ENCODE measurements at regions of chr1 and their contacts with region 1.

Region 1: DNA sequence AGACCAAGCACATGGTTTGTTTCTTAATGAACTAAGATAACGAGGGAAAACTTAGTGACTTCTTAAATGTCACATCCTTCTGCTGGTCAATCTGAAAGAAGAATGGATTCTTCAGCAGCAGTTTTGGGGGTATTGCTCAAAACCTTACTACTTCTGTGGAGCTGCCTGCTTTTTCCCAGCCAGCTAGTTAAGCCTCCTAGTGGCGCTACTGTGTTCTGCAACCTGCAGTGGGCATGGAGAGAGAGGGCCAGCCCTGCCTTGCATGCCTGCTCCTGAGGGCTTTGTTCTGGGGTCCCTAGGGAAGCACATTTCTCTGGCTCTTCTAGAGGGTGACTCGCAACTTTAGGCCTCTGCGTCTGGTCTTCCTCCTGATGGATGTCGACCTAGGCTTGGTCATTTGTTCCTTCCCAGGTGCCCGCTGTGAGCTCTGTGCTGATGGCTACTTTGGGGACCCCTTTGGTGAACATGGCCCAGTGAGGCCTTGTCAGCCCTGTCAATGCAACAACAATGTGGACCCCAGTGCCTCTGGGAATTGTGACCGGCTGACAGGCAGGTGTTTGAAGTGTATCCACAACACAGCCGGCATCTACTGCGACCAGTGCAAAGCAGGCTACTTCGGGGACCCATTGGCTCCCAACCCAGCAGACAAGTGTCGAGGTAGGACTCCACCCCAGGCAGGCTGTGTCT is 42.0 kb downstream of the LAMC2 start:
- DNase-seq: peak; percentile 59
- ATAC-seq: peak; percentile 72
- H3K4me3 Mint-ChIP-seq: no peak overlapping the region
- H3K27ac Mint-ChIP-seq: no peak overlapping the region
- H3K4me1 Mint-ChIP-seq: peaks cover 12% of the 10 kb centered on the region
- H3K27me3 Mint-ChIP-seq: no peaks in the 10 kb centered on the region

Region 2: DNA sequence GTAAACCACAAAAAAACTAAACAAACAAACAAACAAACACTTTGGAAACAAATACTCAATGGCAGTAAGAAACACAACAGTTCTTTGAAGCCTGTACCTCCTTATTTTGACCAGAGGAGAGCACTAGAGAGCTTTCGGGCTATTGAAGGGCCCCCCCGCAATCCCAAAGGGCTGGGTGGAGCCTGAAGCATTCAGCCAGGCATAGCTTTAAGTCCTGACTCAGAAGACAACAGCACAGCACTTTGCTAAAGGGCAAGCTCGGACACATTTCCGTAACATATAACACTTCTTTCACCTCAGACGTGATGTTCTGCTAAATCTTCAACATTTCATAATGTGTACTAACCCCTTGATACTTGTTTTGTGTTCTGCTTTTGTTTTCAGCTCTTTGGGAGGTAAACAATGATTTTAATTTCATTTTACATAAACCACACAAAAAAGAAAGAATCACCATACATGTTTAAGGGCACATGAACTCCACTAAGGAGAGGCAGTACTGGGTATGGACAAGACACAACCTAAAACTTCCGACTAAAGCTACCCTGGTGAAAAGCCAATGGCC is 265.5 kb before region 1 on chr1:
- CTCF ChIA-PET with region 1: interaction called, 10 read pairs
- POLR2A ChIA-PET with region 1: no interaction called
- DNase-seq: peak; percentile 43
- ATAC-seq: no peak
- H3K4me3 Mint-ChIP-seq: no peak overlapping the region
- H3K27ac Mint-ChIP-seq: no peak overlapping the region
- H3K4me1 Mint-ChIP-seq: no peaks in the 10 kb centered on the region
- H3K27me3 Mint-ChIP-seq: peaks cover 3% of the 10 kb centered on the region

Region 3: DNA sequence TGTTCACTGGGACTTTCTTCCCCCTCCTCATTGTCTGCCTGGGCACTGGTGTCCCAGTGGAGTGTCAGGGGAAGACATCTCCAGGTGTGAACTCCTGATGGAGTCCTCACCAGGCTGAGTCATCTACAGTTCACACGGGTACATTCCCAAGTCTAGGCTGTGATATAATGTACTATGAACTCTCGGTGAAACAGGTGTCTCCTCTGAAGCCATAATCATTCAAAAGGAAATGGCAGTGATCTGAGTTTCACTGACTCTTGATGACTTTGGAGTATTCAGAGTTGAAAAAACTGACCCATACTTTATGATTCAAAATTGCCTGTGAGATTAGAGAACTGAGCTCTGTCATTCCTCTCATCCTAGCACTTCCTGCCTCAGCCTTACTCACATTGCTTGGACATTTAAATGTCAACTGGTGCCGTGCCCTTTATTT is 32.9 kb before region 1 on chr1:
- CTCF ChIA-PET with region 1: interaction called, 10 read pairs
- POLR2A ChIA-PET with region 1: no interaction called
- DNase-seq: no peak
- ATAC-seq: no peak
- H3K4me3 Mint-ChIP-seq: peak overlapping the region; percentile 56
- H3K27ac Mint-ChIP-seq: peak overlapping the region; percentile 51
- H3K4me1 Mint-ChIP-seq: peaks cover 21% of the 10 kb centered on the region
- H3K27me3 Mint-ChIP-seq: peaks cover 24% of the 10 kb centered on the region